Naive thymus-derived CD8-positive, alpha-beta T cell (primary cell): ENCODE measurements at regions of chr18 and their contacts with region 1.

Region 1: GRCh38 chr18:9102508-9103375 is at the start of gene NDUFV2:
- DNase-seq: peak; percentile 93 to 99 (median 98)
- ATAC-seq: peak; percentile 86 to 88
- H3K4me3 Mint-ChIP-seq: peak within 1 kb of the TSS; percentile 89 to 98 (median 93)
- H3K27ac Mint-ChIP-seq: peak within 1 kb of the TSS; percentile 89 to 100 (median 96)
- H3K4me1 Mint-ChIP-seq: peaks cover 40 to 58% (median 53%) of the 10 kb centered on the region in 4 donors
- H3K27me3 Mint-ChIP-seq: no peaks in the 10 kb centered on the region
- polyA plus RNA-seq, gene NDUFV2: 106 to 155 (median 128) TPM

Region 2: DNA sequence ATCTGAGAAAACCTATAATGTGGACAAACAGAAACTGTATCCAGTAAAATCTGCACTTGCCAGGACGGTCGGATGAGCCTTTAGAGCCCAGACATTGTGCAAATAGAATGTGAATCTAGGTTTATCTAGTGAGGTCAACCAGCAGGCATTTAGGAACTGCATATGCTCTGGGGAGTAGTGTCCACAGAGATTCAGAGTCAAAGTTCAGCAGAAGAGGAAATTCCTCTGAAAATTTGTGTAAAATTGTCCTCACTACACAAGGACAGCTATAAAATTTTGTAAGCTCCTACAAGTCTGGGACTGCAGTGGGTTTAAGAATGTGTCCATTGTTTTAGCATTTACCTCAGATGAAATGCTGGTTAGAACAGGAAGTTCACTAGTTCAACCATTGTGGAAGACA is 10.1 kb before region 1 on chr18:
- POLR2A ChIA-PET with region 1: interaction called, 21 read pairs
- DNase-seq: no peak
- ATAC-seq: no peak
- H3K4me3 Mint-ChIP-seq: peak overlapping the region in 1 of 10 donors; percentile 41
- H3K27ac Mint-ChIP-seq: peak overlapping the region in 9 of 10 donors; percentile 24 to 97 (median 63)
- H3K4me1 Mint-ChIP-seq: peaks cover 21 to 68% (median 58%) of the 10 kb centered on the region in 4 donors
- H3K27me3 Mint-ChIP-seq: no peaks in the 10 kb centered on the region

Region 3: DNA sequence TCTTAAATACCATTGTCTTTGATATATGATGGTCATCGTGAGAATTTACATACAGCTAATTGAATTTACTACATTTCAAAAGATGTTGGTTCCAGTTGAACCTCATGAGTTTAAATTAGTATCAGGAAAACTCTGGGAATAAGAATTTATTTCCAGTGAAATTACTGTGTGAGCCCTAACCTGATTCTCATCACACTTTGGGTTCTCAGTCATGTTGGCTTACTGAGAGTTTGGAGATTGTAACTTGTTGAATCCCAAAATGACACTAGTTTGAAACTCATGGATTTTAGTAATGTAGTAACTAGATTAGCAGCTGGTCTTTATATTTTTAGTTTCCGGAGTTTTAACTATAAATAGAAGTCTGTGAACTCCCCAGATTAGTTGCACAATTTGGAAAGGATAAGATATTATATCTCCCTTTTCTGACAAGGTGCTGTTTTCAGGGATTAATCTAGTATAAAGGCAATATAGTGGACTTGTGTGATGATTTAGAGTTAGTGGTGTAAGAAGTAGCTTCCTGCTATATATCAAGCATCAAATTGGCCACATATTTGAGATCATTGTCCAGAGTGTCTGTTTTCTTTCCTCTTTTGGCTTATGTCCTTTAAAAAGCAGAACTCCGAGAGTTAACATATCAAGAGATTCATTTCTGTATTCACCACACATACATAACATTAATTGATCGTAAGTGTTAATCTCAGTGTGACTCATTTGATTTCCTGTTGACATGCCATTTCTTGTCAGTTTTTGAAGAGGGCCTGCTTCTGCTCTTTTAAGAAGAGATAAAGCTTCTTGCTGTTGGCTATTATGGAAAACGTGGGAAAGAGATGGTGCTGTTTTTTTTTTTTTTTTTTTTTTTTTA is 15.5 kb after region 1 on chr18:
- POLR2A ChIA-PET with region 1: interaction called, 83 read pairs
- DNase-seq: peak in 3 of 10 donors; percentile 31 to 44 (median 32)
- ATAC-seq: peak; percentile 57 to 58
- H3K4me3 Mint-ChIP-seq: peak overlapping the region; percentile 38 to 98 (median 76)
- H3K27ac Mint-ChIP-seq: peak overlapping the region; percentile 89 to 100 (median 95)
- H3K4me1 Mint-ChIP-seq: peaks cover 26 to 89% (median 67%) of the 10 kb centered on the region in 4 donors
- H3K27me3 Mint-ChIP-seq: no peaks in the 10 kb centered on the region

Region 4: GRCh38 chr18:9126337-9126736 is 23.6 kb after region 1 on chr18:
- POLR2A ChIA-PET with region 1: interaction called, 11 read pairs
- DNase-seq: no peak
- ATAC-seq: no peak
- H3K4me3 Mint-ChIP-seq: no peak overlapping the region
- H3K27ac Mint-ChIP-seq: peak overlapping the region in 4 of 10 donors; percentile 12 to 71 (median 60)
- H3K4me1 Mint-ChIP-seq: peaks cover 13 to 67% (median 42%) of the 10 kb centered on the region in 4 donors
- H3K27me3 Mint-ChIP-seq: no peaks in the 10 kb centered on the region

Region 5: GRCh38 chr18:9136315-9137155 is 33.8 kb after region 1 on chr18 and contains the start of gene ANKRD12:
- POLR2A ChIA-PET with region 1: interaction called, 254 read pairs
- DNase-seq: peak; percentile 94 to 99 (median 97)
- ATAC-seq: peak; percentile 68 to 69
- H3K4me3 Mint-ChIP-seq: peak within 1 kb of the TSS; percentile 88 to 99 (median 97)
- H3K27ac Mint-ChIP-seq: peak within 1 kb of the TSS; percentile 98 to 100 (median 99)
- H3K4me1 Mint-ChIP-seq: peaks cover 33 to 80% (median 65%) of the 10 kb centered on the region in 4 donors
- H3K27me3 Mint-ChIP-seq: no peaks in the 10 kb centered on the region
- polyA plus RNA-seq, gene ANKRD12: 15.7 to 70.4 (median 26.3) TPM

Region 6: GRCh38 chr18:9147440-9148202 is 44.9 kb after region 1 on chr18:
- POLR2A ChIA-PET with region 1: interaction called, 10 read pairs
- DNase-seq: peak in 8 of 10 donors; percentile 23 to 66 (median 49)
- ATAC-seq: peak; percentile 80
- H3K4me3 Mint-ChIP-seq: peak overlapping the region in 9 of 10 donors; percentile 3 to 67 (median 30)
- H3K27ac Mint-ChIP-seq: peak overlapping the region; percentile 44 to 90 (median 73)
- H3K4me1 Mint-ChIP-seq: peaks cover 25 to 87% (median 67%) of the 10 kb centered on the region in 4 donors
- H3K27me3 Mint-ChIP-seq: no peaks in the 10 kb centered on the region

Region 7: DNA sequence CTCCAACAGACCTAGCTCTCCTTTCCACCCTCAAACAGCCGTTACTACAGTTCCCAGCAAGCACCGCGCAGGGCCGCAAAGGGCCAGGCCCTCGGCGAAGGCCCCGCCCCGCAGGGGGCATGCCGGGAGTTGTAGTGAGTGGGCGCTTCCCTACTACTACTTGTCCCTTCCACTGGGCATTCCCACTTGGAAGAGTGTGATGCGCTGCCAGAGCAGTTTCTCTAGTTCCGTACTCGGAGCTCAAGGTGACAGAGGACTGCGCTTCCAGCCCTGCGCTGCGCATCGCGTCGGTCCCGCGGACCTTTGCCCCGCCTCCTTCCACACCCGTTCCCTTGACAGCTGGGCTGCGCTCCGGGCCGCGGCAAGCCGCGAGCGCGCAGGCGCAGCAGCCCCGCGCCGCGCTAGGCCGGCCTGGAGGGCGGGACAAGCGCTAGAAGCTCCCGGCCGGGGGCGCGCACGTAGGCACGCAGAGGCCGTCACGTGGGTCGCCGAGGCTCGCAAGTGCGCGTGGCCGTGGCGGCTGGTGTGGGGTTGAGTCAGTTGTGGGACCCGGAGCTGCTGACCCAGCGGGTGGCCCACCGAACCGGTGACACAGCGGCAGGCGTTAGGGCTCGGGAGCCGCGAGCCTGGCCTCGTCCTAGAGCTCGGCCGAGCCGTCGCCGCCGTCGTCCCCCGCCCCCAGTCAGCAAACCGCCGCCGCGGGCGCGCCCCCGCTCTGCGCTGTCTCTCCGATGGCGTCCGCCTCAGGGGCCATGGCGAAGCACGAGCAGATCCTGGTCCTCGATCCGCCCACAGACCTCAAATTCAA is 811.0 kb after region 1 on chr18 and contains the start of gene VAPA:
- POLR2A ChIA-PET with region 1: interaction called, 10 read pairs
- DNase-seq: peak; percentile 88 to 97 (median 92)
- ATAC-seq: peak; percentile 81 to 82
- H3K4me3 Mint-ChIP-seq: peak within 1 kb of the TSS; percentile 85 to 95 (median 92)
- H3K27ac Mint-ChIP-seq: peak within 1 kb of the TSS; percentile 86 to 98 (median 96)
- H3K4me1 Mint-ChIP-seq: peaks cover 13 to 29% (median 27%) of the 10 kb centered on the region in 4 donors
- H3K27me3 Mint-ChIP-seq: peaks cover 0 to 2% (median 0%) of the 10 kb centered on the region in 5 donors
- polyA plus RNA-seq, gene VAPA: 187 to 214 (median 199) TPM